IMR-90 (cell line): ENCODE measurements at regions of chr12 and their contacts with region 1.

Region 1: DNA sequence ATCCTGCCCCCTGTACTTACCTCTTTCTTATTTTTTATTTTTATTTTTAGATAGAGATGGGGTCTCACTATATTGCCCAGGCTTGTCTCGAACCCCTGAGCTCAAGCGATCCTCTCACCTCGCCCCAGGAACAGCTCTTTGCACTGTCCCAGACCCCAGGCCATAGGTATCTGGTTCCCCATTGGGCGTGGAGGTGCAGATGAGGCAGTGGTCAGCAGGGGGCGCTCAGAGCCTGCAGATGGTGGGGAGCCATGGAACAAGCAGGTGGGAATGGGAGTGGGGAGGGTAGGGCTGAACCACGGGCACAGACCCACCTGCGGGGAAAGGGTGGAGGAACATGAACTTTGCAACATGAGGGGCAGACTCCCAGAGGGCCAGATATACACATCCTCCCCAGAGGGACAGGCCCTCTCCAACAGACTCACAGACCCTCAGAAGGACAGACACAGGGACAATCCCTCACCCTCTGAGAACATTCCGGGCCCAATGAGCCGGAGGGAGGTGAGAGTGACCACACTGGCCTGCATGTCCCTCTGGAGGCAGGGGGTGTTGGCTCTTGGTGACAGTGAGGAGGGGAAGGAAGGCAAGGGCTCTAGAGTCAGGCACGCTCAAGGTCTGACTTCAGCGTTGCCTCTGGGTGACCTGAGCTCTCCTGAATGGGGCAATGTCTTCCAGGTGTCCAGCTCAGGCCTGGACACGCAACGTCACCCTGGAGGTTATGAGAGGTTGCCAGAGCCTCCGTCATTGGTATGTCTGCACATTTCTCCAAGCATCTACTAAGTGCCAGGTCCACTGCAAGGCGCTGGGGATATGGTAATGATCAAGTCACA is 34.9 kb downstream of the KRT80 start:
- DNase-seq: peak; percentile 42
- ATAC-seq: peak; percentile 83
- H3K4me3 ChIP-seq: no peak overlapping the region
- H3K27ac ChIP-seq: no peak overlapping the region
- H3K4me1 ChIP-seq: no peaks in the 10 kb centered on the region
- H3K27me3 ChIP-seq: no peaks in the 10 kb centered on the region
- CTCF ChIP-seq: peak; percentile 97
- POLR2A ChIP-seq: peak; percentile 55; the same call in 1 of the 2 replicates
- RAD21 ChIP-seq: peak; percentile 98

Region 2: GRCh38 chr12:51846911-51847642 is 309.9 kb before region 1 on chr12:
- CTCF ChIA-PET with region 1: no interaction called
- POLR2A ChIA-PET with region 1: no interaction called
- dilution Hi-C with region 1: no loop called
- in situ Hi-C with region 1: no loop called
- intact Hi-C with region 1: no loop called
- DNase-seq: no peak
- ATAC-seq: peak; percentile 59
- H3K4me3 ChIP-seq: peak overlapping the region; percentile 50
- H3K27ac ChIP-seq: no peak overlapping the region
- H3K4me1 ChIP-seq: no peaks in the 10 kb centered on the region
- H3K27me3 ChIP-seq: peaks cover 67% of the 10 kb centered on the region
- CTCF ChIP-seq: no peak
- POLR2A ChIP-seq: no peak
- RAD21 ChIP-seq: no peak

Region 3: DNA sequence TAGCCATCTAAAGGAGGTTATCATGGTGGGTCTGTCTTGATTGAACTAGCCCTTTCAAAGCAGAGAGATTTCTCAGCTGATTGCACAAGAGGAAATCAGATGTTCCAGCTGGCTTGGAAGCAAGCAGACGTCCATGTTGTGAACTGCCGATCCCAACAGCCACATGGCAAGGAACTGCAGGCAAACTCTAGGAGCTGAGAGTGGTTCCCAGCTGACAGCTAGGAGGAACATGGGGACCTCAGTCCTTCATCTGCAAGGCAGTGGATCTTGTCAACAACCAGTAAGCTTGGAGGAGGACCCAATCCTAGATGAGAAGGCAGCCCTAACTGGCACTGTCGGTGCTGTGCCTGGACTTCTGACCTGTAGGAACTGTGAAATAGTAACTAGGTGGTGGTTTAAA is 197.7 kb before region 1 on chr12:
- CTCF ChIA-PET with region 1: no interaction called
- POLR2A ChIA-PET with region 1: no interaction called
- dilution Hi-C with region 1: no loop called
- in situ Hi-C with region 1: no loop called
- intact Hi-C with region 1: no loop called
- DNase-seq: peak; percentile 41
- ATAC-seq: no peak
- H3K4me3 ChIP-seq: no peak overlapping the region
- H3K27ac ChIP-seq: peak overlapping the region; percentile 26; the same call in 1 of the 2 replicates
- H3K4me1 ChIP-seq: peaks cover 14% of the 10 kb centered on the region
- H3K27me3 ChIP-seq: no peaks in the 10 kb centered on the region
- CTCF ChIP-seq: no peak
- POLR2A ChIP-seq: no peak
- RAD21 ChIP-seq: no peak

Region 4: DNA sequence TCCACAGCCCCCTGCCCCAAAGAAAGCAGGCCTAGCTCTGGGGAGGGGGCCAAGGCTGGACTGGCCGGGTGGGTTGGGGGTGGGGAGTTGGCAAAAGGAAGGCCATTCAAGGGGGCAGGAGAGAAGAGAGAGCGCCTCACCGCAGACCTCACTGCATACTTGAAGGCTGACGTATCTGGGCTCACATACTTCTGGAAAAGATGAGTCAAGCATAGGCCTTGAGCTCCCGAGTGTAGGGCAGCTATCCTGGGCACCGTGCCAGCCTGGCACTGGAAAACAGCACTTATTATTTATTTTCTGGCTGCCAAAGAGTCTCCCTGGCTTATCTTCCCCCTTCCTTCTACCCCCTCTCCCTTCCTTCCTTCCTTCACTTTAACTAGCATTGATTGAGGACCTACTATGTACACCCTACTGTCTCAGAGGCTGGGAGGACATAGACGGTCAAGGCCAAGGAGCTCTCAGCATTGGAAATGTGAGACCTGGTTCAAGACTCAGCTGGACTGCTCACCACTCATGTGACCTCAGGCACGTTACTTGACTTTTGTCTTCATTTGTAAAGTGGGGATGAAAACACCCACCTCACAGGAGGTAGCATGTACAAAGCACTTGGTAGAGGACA is 35.3 kb after region 1 on chr12:
- CTCF ChIA-PET with region 1: no interaction called
- POLR2A ChIA-PET with region 1: no interaction called
- dilution Hi-C with region 1: no loop called
- in situ Hi-C with region 1: no loop called
- intact Hi-C with region 1: no loop called
- DNase-seq: peak; percentile 99
- ATAC-seq: peak; percentile 85
- H3K4me3 ChIP-seq: no peak overlapping the region
- H3K27ac ChIP-seq: peak overlapping the region; percentile 90
- H3K4me1 ChIP-seq: peaks cover 59% of the 10 kb centered on the region
- H3K27me3 ChIP-seq: no peaks in the 10 kb centered on the region
- CTCF ChIP-seq: no peak
- POLR2A ChIP-seq: no peak
- RAD21 ChIP-seq: no peak

Region 5: GRCh38 chr12:52213512-52214420 is 56.8 kb after region 1 on chr12:
- CTCF ChIA-PET with region 1: interaction called, 5 read pairs
- POLR2A ChIA-PET with region 1: no interaction called
- dilution Hi-C with region 1: no loop called
- in situ Hi-C with region 1: no loop called
- intact Hi-C with region 1: loop called (anchors 2 kb)
- DNase-seq: peak; percentile 78
- ATAC-seq: peak; percentile 98
- H3K4me3 ChIP-seq: no peak overlapping the region
- H3K27ac ChIP-seq: no peak overlapping the region
- H3K4me1 ChIP-seq: peaks cover 9% of the 10 kb centered on the region
- H3K27me3 ChIP-seq: no peaks in the 10 kb centered on the region
- CTCF ChIP-seq: peak; percentile 100
- POLR2A ChIP-seq: no peak
- RAD21 ChIP-seq: peak; percentile 100

Region 6: DNA sequence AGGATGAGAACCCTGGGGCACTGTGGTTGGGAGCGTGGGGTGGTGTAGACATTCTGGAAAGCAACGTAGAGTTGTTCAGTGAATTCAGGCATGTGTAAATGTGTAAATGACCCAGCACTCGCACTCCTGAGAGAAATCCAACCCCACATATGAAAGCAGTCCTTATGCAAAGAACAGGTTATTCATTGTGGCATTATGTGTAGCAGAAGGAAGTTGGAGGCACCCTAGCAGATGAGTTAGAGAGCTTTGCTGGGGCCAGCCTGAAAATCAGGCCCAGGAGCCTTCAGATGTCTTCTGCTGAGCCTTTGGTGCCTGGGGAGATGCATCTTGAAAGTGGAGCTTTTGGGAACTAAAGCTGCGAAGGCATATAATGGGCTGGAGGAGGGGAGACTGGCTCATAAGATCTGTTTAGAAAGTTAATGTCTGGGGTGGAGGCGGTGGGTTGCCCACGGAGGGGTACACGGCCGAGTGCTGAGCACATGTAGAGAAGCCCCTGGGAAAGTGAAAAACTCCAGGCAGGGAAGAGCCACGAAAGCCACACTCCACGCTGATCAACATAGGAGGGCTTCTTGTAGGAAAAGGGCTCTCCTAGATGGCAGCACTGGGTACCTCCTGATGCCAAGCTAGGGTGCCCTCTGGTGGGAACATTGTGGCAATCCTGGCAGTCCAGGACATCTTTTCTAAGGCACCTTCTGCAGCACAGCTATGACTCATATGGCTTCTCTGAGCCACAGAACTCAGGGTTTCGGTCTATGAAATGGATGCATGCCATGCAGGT is 170.3 kb after region 1 on chr12:
- CTCF ChIA-PET with region 1: interaction called, 6 read pairs
- POLR2A ChIA-PET with region 1: no interaction called
- dilution Hi-C with region 1: no loop called
- in situ Hi-C with region 1: loop called (anchors 5 kb)
- intact Hi-C with region 1: loop called (anchors 1 kb)
- DNase-seq: peak; percentile 91
- ATAC-seq: peak; percentile 98
- H3K4me3 ChIP-seq: no peak overlapping the region
- H3K27ac ChIP-seq: no peak overlapping the region
- H3K4me1 ChIP-seq: no peaks in the 10 kb centered on the region
- H3K27me3 ChIP-seq: peaks cover 55% of the 10 kb centered on the region
- CTCF ChIP-seq: peak; percentile 99; the same call in 1 of the 2 replicates
- POLR2A ChIP-seq: no peak
- RAD21 ChIP-seq: peak; percentile 96

Region 7: DNA sequence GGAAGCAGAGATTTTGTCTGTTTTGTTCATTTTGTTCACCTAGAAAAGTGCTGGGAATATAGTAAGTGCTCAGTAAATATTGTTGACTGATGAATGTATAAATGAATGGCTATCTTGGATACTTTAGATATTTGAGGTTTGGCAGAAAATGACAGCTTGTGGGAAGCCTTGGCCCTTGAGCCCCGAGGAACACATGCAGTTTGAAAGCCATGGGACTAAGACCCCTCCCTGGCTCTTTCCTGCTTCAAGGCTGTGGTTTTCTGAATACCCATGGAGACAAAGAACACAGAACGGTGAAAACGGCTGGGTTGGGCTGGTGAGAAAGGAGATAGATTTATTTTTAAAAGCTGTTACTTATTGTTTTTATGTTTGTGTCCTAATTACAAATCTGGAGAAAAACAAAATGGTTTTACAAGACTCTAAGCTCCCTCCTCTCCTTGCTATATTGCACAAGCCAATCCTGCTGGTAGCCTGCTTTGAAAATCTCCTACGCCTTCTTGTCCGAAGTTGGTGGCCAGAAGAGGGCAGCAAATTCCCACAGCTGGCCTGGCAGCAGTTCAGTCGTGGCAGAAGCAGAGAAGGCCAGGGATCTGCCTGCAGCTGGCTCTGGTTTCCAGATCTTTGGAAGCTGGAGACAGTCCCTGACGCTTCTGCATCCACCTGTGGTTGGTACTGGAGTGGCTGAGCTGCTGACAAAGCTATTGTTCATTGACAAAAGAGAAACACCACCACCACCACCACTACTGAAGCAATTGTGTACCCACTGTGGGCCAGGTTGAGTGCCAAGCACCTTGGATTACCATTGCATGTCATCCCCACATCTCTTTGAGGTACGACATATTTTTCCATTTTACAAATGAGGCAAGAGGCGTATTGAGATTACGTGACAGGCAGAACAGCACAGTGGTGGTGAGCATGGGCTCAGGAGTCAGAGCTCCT is 215.5 kb after region 1 on chr12:
- CTCF ChIA-PET with region 1: interaction called, 6 read pairs
- POLR2A ChIA-PET with region 1: no interaction called
- dilution Hi-C with region 1: no loop called
- in situ Hi-C with region 1: no loop called
- intact Hi-C with region 1: loop called (anchors 1 kb)
- DNase-seq: peak; percentile 81
- ATAC-seq: peak; percentile 94
- H3K4me3 ChIP-seq: no peak overlapping the region
- H3K27ac ChIP-seq: no peak overlapping the region
- H3K4me1 ChIP-seq: no peaks in the 10 kb centered on the region
- H3K27me3 ChIP-seq: peaks cover 36% of the 10 kb centered on the region
- CTCF ChIP-seq: peak; percentile 93
- POLR2A ChIP-seq: no peak
- RAD21 ChIP-seq: peak; percentile 92

Region 8: DNA sequence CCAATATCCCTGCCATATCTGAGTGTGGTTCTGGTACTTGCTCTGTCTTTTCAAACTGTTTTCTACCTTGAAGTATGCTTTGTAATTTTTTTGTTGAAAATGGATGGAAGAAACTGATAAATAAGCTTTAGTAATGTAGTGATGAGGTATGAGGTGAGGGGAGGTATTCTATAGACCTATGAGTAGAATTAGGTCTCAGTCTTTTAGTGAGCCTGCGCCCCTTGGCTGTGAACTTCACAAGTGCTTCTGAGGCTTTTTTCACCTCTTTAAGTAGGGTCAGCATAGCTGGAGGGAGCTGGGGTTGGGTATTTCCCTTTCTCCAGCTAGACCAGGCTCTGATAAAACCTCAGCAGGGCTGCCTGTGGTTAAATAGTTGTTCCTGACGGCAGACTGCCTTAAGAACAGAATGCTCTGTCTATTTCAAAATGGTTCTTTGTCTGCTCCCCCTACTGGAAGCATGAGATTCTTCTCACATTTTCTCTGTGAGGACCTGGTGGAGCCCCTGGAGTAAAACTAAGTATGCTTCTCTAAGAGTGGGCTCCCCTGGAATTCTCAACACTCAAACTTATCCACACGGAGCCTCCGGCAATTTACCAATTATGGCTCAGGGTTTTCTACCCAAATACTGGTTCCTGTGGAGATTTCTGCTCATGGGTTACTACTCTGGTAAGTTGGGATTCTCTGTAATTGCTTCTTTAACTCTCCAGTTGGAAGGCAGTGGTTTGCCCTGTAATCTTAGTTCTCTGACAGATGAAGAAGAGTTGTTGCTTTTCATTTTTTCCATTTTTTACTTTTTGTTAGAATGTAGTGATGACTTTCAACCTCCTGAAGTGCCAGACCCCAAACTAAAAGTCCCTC is 350.1 kb after region 1 on chr12:
- CTCF ChIA-PET with region 1: no interaction called
- POLR2A ChIA-PET with region 1: no interaction called
- dilution Hi-C with region 1: no loop called
- in situ Hi-C with region 1: no loop called
- intact Hi-C with region 1: loop called (anchors 1 kb)
- DNase-seq: peak; percentile 65
- ATAC-seq: peak; percentile 84
- H3K4me3 ChIP-seq: no peak overlapping the region
- H3K27ac ChIP-seq: no peak overlapping the region
- H3K4me1 ChIP-seq: no peaks in the 10 kb centered on the region
- H3K27me3 ChIP-seq: peaks cover 7% of the 10 kb centered on the region
- CTCF ChIP-seq: peak; percentile 51
- POLR2A ChIP-seq: no peak
- RAD21 ChIP-seq: peak; percentile 39; the same call in 1 of the 2 replicates

Region 9: GRCh38 chr12:52582971-52583456 is 426.1 kb after region 1 on chr12:
- CTCF ChIA-PET with region 1: no interaction called
- POLR2A ChIA-PET with region 1: no interaction called
- dilution Hi-C with region 1: no loop called
- in situ Hi-C with region 1: loop called (anchors 10 kb)
- intact Hi-C with region 1: loop called (anchors 2 kb)
- DNase-seq: peak; percentile 43
- ATAC-seq: peak; percentile 99
- H3K4me3 ChIP-seq: no peak overlapping the region
- H3K27ac ChIP-seq: no peak overlapping the region
- H3K4me1 ChIP-seq: no peaks in the 10 kb centered on the region
- H3K27me3 ChIP-seq: peaks cover 49% of the 10 kb centered on the region
- CTCF ChIP-seq: peak; percentile 85
- POLR2A ChIP-seq: no peak
- RAD21 ChIP-seq: peak; percentile 87

Region 10: DNA sequence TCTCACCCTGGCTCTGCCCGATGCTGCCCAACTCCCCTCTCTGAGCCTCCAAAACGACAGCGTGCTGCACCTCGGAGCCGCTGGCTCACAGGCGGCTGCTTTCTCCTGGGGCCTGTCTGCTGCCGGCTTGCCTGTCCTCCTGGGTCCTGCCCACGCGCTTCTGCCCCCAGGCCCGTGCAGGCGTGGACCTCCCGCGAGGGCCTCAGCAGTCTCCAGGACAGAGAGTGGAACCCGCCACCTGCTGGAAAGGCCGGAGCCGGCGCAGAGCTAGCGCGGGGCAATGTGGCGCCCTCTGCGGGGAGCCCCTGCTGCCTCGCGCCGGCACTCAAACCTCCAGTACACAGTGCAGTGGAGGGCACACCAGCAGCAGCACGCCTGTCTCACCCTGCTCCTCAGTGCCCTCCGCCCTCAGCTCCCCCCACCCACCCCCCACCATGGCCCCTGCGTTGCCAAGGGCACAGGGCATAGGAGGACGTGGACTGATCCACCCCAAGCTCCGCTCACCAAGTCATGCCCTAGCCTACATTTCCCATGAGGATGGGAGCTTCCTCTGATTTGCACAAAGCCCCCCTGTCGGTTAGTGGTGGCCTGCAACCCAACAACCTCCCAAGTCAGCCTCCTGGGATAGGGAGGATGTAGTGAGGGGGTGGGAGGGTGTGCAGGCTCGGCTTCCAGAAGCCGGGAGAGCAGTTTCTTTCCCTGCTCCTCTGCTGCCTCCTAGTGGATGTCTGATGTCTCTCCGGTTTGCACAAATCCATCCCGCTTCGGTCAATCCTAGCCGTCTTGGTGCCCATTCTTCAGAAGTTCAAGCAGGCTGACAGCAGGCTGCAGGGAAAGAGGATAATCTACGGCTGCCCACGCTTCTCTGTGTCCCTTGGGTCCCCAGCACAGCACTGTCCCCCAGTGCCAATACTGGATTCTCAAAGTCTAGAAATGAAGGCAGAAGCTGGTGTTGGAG is 722.7 kb after region 1 on chr12:
- CTCF ChIA-PET with region 1: interaction called, 4 read pairs
- POLR2A ChIA-PET with region 1: no interaction called
- dilution Hi-C with region 1: no loop called
- in situ Hi-C with region 1: no loop called
- intact Hi-C with region 1: loop called (anchors 1 kb)
- DNase-seq: peak; percentile 86
- ATAC-seq: peak; percentile 94
- H3K4me3 ChIP-seq: no peak overlapping the region
- H3K27ac ChIP-seq: no peak overlapping the region
- H3K4me1 ChIP-seq: peaks cover 3% of the 10 kb centered on the region
- H3K27me3 ChIP-seq: no peaks in the 10 kb centered on the region
- CTCF ChIP-seq: peak; percentile 98
- POLR2A ChIP-seq: peak; percentile 52
- RAD21 ChIP-seq: peak; percentile 97